Left ventricle myocardium superior (tissue), 1 donor: ENCODE measurements at regions of chr18 and their contacts with region 1.

Region 1: DNA sequence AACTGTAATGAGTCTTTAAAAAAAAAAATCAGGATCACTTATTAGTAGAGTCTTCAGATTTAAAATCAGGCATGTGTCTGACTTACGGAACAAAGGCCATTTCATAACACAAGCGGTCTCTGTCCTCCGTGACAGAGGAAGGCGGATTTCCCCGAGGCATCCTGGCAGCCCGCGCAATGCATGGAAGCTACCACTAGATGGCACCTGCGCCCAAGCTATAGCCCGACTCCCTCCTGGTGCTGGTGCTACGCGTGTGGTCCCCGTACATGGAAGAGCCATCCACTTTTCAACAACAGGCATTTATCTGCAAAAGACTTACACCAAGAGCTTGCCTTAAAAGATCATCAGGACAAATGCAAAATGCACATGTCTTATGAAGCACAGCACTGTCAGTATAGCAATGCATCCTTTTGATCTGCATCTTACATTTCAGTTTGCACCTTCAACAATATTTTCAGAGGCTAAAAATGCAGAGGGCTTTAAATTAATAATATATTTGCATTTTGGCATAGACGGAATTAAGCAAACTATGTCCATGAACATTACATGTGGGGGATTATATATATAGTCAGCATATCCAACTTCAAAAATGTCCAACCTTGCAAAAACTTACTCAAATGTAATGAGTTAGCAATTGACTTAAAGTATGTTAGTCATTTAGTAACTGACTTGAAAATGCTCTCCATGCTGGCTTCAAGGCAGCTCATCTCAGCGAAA is 96.0 kb downstream of the ZNF516 start:
- DNase-seq: peak; percentile 88
- ATAC-seq: peak; percentile 96

Region 2: DNA sequence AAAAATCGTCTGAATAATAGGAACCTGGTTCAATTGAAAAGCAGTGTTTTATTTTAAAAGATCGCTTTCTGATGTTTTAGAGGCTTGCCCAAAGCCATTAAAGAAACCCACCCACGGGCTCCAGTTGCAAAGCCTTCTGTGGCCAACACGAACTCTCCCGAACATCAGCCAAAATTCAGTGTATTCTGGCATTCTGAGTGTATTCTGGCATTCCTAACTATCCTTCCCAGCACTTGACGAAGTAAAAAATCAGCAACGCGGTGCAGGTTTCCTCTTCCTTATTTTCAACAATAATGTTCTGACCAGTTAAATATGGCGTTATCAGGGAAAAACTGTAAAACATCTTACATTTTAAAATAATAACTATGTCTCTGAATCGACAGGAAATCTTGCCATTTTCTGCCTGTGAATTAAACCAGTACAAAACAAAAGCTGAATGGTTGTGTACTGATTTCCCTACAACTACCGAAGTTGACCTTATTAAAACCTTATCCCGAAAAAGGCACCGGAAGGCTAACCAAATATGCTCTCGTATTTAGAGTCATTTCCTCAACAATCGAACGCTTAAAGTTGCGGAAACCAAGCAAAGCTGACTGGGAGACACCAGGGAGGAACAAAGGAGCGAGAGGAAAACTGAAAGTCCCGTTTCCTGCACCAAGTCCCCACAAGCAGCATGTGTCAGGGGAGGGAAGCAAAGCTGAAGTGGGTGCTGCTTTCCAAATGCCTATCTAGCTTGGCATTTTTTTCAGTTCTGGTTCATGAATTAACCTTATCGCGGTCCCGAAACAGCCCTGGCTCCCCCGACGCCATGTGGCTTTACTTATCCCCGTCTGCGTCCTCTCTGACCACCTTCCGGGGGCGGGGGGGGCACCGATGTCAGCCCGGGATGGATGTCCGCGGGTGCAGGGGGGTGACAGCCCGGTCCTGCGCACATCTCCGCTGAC is 51.7 kb after region 1 on chr18:
- intact Hi-C with region 1: no loop called
- DNase-seq: peak; percentile 74
- ATAC-seq: peak; percentile 76

Region 3: DNA sequence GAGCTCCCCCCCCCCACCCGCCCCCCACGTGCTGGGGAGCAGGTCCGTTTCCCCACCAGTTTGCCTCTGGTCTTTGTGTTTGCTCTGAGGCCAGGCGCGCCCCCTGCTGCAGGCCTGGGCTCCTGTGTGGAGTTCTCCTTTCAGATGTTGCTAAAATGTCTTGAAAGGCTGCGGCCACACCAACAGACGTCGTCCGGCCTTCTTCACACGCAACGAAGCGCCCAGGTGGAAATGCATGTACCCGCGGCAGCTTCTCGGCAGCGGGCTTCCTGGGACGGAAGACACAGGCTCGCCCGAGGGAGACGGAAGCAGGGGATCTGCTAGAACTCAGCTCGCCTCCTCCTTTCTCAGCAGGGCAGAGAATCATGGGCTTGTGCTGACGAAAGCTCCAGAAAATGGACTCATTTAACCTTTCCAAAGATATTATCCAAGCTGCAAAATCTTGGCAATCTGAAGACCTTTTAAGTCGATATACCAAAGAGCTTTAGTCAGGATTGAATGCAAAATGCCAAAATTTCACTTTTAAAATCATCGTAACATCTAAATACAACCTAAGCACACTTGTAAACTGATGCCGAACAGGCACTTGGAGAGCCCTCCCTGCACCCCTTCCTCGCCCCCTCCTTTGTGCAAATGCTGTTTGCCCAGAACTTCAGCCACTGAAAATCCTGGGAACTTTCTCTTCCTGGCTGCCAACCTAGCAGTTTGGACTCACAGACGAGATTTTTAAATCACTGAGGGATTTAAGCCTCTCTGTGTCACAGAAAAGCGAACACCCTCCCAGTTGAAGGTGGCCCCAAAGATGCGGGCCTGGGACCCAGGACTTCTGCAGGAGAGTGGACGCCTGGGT is 221.5 kb after region 1 on chr18:
- intact Hi-C with region 1: loop called (anchors 10 kb)
- DNase-seq: peak; percentile 83
- ATAC-seq: peak; percentile 91

Region 4: GRCh38 chr18:76709659-76710645 is 310.9 kb after region 1 on chr18:
- intact Hi-C with region 1: loop called (anchors 5 kb)
- DNase-seq: peak; percentile 77
- ATAC-seq: peak; percentile 86

Region 5: DNA sequence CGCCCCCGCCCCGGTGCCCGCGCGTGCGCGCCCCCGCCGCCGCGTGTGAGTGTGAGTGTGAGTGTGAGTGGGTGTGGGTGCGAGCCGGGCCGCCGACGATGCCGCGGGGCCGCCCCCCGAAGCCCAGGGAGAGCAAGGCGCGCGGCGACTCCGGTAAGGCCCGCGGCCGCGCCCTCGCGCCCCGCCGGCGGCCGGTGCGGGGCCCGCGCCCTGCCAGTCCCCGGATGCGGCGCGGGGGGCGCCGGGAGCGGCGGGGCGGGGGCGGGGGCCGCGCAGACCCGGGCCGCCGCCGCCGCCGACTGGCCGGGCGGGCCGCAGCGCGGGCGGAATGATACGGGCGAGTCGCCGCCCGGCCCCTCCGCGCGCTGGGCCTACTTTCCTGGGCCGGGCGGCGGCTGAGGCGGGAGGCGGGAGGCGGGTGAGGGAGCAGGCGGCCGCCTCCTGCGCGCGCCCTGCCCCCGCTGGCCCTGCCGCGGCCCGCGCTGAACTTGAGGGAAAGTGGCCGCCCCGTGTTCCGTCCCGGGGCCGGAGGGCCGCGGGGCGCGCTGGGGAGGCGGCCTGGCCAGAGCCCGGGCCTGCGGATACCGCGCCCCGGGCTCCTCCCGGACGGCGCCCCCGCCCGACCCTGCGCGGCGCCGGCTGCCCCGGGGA is 423.6 kb after region 1 on chr18 and contains the start of gene ZNF236:
- intact Hi-C with region 1: no loop called
- DNase-seq: peak; percentile 87
- ATAC-seq: peak; percentile 81
- total RNA-seq, gene ZNF236: 13.4 TPM